HEK293T (cell line): ENCODE measurements at regions of chr4 and their contacts with region 1.

Region 1: GRCh38 chr4:139665690-139666529 is at the start of gene MGST2:
- DNase-seq: peak; percentile 58

Region 2: DNA sequence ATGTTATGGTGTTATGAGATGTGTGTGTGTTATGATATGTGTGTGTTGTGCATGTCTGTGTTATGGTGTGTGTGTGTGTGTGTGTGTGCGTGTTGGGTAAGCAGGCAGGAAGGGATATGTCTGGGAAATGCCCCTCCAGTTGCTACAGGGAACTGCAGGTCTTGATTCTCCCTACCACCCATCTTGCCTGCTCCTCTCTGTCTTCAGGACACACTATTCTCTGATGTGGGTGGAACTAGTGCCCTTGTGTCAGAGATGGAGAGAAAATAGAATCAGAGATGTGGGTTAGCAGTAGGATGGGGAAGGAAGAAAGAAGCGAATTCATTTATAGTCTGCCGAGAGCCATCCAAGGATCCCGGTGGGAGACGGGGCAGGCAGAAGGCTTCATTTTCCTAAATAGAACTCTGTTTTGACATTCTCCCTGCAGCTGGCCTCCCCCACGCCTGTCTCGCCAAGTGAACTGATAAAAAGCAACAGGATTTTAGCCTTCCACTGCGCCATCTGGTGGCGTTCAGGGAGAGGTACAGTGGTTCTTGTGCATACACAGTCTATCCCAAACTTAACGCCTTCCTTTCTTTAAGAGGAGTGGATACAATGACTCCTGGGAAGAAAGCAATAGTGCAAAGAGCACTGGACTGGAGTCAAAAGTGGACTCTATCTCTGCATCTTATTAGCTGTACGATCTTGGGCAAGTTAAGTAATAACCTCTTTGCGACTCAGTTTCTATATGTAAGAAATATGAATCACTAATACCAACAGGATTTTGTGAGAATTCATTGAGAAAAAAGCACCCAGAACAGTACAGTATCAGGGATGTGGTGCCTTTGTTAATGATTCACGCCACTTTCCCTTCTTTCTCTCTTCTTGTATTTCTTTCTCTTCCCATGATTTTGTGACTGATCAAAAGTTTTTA is 14.4 kb before region 1 on chr4:
- CTCF ChIA-PET with region 1: interaction called, 33 read pairs
- POLR2A ChIA-PET with region 1: interaction called, 19 read pairs
- DNase-seq: peak; percentile 71

Region 3: DNA sequence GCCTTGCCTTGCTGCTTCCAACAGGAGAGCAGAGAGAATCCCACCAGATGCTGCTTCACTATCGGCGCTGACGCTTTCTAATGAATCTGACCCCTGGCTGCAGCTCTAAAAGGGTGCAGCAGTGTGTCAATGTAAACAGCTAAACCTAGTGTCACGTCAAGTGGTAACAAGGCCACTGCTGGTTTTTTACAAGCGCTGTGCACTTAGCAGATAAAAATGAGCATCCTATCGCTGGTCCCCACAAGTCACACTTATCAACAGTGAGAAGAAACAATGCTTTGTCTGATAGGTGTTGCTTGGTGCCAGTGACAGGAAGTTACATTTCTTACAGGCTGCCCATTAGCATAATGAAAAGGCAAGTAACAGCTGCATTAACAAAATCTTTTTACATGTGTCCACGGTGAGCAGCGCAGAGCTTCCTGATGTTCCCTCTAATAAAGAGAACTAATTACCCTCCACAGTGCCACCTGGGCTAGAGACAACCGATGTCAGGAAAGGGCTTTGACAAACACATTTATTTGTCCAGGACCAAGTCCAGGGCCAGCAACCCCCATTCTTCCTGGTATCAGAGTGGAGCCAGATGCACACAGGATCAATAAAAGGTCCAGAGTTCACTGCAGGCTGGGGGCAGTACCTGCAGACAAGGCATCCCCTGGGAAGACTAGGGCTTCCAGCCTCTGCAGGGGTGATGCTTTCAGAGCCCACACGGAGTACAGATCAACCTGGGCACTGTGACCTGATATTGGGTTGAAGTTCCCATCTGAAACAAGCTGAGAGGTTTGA is 175.7 kb after region 1 on chr4:
- CTCF ChIA-PET with region 1: no interaction called
- POLR2A ChIA-PET with region 1: no interaction called
- DNase-seq: peak; percentile 23